Mammary epithelial cell (primary cell): ENCODE measurements at regions of chr17 and their contacts with region 1.

Region 1: DNA sequence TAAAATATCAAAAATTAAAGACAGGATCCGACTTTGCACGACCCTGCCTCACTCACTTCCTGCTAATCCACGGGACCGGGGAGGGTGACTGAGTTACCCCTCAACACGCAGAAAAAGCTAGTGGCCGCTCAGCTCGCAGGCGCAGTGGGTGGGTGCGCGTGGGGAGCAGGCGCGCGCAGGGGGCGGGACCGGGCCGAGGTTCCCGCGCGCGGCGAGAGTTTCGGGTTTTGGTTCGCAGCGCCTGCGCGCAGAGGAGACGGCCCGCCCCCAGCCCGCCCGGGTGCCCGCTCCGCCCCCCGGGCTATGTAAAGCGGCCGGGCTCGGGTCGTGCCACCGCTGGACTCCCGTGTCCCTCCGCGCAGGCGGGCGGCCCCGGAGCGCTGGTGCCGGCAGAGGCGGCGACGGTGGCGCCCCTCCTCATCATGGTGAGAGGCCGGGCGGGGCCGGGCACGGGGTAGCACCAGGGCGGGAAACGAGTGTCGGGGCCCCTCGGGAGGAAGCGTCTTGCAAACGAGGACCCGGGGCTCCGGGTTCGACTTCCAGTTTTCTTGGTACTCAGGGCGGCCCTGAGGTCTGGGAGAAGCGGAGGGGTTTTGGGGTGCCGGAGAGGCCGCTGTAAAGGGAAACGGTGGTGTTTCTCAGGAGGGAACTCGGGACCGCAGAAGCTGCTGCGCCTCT is at the start of gene CNP:
- DNase-seq: peak; percentile 92
- H3K4me3 ChIP-seq: peak within 1 kb of the TSS; percentile 77 to 93 (median 80)
- H3K27ac ChIP-seq: peak within 1 kb of the TSS; percentile 82
- H3K4me1 ChIP-seq: peaks cover 25% of the 10 kb centered on the region
- H3K27me3 ChIP-seq: no peaks in the 10 kb centered on the region
- CTCF ChIP-seq: no peak
- total RNA-seq, gene CNP: 61.7 to 72.6 TPM

Region 2: DNA sequence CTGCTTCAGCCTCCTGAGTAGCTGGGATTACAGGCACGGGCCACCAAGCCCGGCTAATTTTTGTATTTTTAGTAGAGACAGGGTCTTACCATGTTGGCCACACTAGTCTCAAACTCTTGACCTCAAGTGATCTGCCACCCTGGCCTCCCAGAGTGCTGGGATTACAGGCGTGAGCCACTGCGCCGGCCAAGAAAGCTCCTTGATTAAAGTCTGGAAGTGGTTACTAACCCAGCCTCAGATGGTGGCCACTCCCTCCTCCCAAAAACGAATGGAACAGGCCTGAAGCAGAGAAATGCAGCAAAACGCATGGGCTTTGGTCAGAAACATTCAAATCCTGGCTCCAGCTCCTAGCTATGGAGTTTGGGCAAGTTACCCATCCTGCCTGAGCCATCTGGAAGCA is 142.5 kb before region 1 on chr17:
- CTCF ChIA-PET with region 1: no interaction called
- dilution Hi-C with region 1: no loop called
- in situ Hi-C with region 1: no loop called
- intact Hi-C with region 1: no loop called
- DNase-seq: no peak
- H3K4me3 ChIP-seq: no peak overlapping the region
- H3K27ac ChIP-seq: no peak overlapping the region
- H3K4me1 ChIP-seq: no peaks in the 10 kb centered on the region
- H3K27me3 ChIP-seq: no peaks in the 10 kb centered on the region
- CTCF ChIP-seq: no peak

Region 3: GRCh38 chr17:41930009-41930832 is 36.4 kb before region 1 on chr17 and contains the start of gene ODAD4:
- CTCF ChIA-PET with region 1: no interaction called
- dilution Hi-C with region 1: no loop called
- in situ Hi-C with region 1: no loop called
- intact Hi-C with region 1: no loop called
- DNase-seq: peak; percentile 98
- H3K4me3 ChIP-seq: peak within 1 kb of the TSS; percentile 50 to 66 (median 60)
- H3K27ac ChIP-seq: peak within 1 kb of the TSS; percentile 79
- H3K4me1 ChIP-seq: peaks cover 10% of the 10 kb centered on the region
- H3K27me3 ChIP-seq: no peaks in the 10 kb centered on the region
- CTCF ChIP-seq: peak; percentile 45 to 56
- total RNA-seq, gene ODAD4: 0.83 to 1.9 TPM

Region 4: DNA sequence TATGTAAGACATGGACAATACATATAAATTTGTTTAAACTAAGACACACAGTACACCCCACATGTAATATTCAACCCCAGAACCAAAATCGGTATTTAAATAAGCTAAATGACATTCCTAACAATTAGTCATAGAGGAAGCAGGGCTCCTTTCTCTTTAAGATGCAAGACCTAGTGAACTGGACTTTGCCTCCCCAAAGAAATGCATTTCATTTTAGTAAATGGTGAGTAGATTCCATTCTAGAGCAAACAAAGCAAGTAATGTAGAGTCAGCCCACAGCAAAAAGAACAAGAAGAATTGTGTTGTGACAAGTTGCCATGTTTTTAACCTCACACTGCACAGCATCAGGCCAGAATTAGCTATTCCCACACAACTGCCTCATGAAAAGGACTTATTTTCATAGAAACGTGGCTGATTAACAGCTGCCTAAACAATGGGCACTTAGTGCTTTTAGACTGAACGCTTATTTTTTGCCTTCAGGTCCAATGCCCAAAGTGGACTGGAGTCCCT is 36.2 kb after region 1 on chr17:
- CTCF ChIA-PET with region 1: no interaction called
- dilution Hi-C with region 1: loop called (anchors 5 kb)
- in situ Hi-C with region 1: no loop called
- intact Hi-C with region 1: no loop called
- DNase-seq: no peak
- H3K4me3 ChIP-seq: no peak overlapping the region
- H3K27ac ChIP-seq: no peak overlapping the region
- H3K4me1 ChIP-seq: peaks cover 13% of the 10 kb centered on the region
- H3K27me3 ChIP-seq: no peaks in the 10 kb centered on the region
- CTCF ChIP-seq: no peak

Region 5: GRCh38 chr17:42019509-42020404 is 53.2 kb after region 1 on chr17 and contains the start of gene NKIRAS2:
- CTCF ChIA-PET with region 1: interaction called, 3 read pairs
- dilution Hi-C with region 1: no loop called
- in situ Hi-C with region 1: no loop called
- intact Hi-C with region 1: loop called (anchors 2 kb)
- DNase-seq: peak; percentile 87
- H3K4me3 ChIP-seq: peak within 1 kb of the TSS; percentile 79 to 98 (median 90)
- H3K27ac ChIP-seq: peak within 1 kb of the TSS; percentile 66
- H3K4me1 ChIP-seq: peaks cover 31% of the 10 kb centered on the region
- H3K27me3 ChIP-seq: no peaks in the 10 kb centered on the region
- CTCF ChIP-seq: peak; percentile 70 to 87
- total RNA-seq, gene NKIRAS2: 28.1 to 40.2 TPM

Region 6: DNA sequence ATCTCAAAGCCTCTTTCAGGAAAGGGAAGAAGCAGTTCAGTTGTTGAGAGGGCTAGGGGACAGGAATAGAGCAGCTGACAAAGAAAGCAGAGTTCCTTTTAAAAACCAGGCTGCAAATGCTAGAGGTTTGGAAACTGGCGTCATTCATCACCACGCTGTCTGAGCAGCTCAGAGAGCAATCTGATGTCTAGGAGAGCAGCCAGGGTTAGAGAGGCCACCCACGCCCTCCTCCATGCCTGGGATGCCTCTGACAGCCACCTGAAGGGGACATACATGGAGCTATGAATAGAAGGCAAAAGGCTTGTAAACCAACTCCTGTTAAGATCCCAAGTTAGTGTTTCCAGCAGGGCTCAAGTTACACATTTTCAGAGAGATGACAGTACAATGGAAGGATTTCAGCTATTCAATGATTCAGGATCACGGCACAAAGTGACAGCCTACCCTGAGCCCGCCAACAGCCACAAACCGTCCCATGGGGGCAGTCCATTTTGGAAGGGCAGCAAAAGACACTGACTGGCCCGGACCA is 175.8 kb after region 1 on chr17:
- CTCF ChIA-PET with region 1: no interaction called
- dilution Hi-C with region 1: no loop called
- in situ Hi-C with region 1: no loop called
- intact Hi-C with region 1: no loop called
- DNase-seq: no peak
- H3K4me3 ChIP-seq: no peak overlapping the region
- H3K27ac ChIP-seq: no peak overlapping the region
- H3K4me1 ChIP-seq: no peaks in the 10 kb centered on the region
- H3K27me3 ChIP-seq: no peaks in the 10 kb centered on the region
- CTCF ChIP-seq: no peak

Region 7: DNA sequence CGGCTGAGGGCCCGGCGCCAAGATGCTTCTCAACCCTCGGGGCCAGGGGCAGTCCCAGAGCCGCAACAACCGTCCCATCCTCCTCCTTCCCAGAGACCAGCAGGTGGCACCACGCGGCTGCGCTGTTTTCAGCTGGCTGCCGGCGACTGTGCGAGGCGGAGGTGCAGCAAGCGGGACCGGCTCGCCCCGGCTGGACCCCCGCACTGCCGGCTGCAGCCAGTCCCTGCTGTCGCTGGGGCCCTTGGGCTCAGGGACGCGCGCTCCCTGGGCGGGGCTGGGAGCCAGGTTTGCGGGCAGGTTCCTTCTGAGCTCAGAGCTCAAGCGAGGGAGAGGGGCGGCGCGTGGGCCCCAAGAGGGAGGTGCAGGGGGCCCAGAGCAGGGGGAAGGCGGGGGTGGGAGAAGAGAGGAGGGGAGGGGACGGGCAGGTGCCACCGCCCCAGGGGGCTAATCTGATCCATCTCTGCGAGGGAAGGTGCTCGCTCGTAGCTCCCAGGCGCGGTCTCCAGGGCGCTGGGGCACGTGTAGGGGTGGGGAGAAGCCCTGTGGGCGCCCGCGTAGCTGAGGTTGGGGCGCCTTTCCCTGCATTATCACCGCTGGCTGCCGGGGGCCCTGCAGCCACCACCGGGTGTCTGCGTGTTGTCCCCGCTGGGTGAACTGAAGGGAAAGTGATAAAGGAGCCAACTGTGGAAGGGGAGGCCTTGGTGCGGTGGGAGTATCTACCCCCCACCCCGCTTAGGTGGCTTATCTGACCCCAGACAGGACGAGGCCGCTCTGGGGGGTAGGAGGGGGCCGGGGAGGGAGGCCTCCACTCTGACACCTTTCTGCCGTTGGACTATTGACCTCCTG is 345.9 kb after region 1 on chr17:
- CTCF ChIA-PET with region 1: no interaction called
- dilution Hi-C with region 1: no loop called
- in situ Hi-C with region 1: no loop called
- intact Hi-C with region 1: loop called (anchors 5 kb)
- DNase-seq: peak; percentile 48
- H3K4me3 ChIP-seq: no peak overlapping the region
- H3K27ac ChIP-seq: no peak overlapping the region
- H3K4me1 ChIP-seq: peaks cover 13% of the 10 kb centered on the region
- H3K27me3 ChIP-seq: no peaks in the 10 kb centered on the region
- CTCF ChIP-seq: peak; percentile 40 to 78